Panc1 (cell line): ENCODE measurements at regions of chr6 and their contacts with region 1.

Region 1: DNA sequence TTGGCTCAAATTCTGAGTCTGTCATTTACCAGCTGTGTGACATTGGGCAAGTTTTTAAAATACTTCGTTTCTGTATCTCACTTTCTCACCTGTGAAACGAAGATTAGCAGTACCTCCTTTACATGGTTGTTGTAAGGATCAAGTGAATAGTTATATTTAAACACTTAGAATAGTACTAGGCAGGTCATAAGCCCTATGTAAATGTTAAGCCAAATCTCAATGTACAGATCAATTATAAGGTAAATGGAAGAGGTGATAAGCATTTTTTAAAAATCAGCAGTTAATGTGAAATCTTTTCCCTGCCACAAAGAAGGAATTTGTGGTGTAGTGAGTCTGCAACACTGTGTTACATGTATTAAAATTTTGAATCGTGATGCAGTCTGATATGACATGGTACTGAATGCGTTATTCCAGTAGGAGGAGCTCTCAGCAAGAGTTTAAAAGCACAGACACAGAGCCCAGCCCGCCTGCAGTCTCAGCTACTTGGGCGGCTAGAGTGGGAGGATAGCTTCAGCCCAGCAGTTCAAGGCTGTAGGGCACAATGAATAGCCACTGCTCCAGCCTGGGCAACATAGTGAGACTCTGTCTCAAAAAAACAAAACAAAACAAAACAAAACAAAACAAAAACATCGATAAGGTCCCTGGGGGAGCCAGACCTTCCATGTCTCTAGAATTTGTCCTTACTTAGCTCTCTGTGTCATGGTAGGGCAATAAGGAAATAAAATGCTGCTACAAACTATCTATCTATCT is 46.0 kb downstream of the GTF2H5 start:
- DNase-seq: peak; percentile 72
- ATAC-seq: peak; percentile 100
- H3K4me3 ChIP-seq: no peak overlapping the region
- H3K27ac ChIP-seq: no peak overlapping the region
- H3K4me1 ChIP-seq: no peaks in the 10 kb centered on the region
- H3K27me3 ChIP-seq: no peaks in the 10 kb centered on the region
- CTCF ChIP-seq: peak; percentile 88

Region 2: DNA sequence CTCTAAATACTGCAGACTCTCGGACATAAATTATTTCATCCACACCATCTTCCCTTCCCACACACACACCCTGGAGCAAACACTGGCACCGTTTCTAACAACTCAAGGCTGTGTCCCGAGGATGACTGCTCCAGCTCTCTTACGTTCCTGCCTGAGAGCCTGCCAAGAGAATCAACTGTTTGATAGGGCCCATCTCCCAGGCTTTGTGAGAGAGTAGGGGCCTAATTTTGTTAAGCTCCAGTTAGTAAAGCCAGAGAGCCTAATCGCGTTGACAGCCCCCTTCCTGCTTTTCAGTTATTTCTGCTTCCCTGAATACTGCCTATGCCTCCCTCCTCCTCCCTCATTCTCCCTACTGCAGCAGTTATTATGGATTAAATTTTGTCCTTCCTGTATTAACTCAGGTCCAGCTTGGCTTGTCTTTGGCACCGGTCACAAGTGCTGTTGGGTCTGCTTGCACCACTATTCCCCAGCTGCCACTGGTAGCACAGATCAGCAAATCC is 227.7 kb after region 1 on chr6:
- CTCF ChIA-PET with region 1: no interaction called
- POLR2A ChIA-PET with region 1: no interaction called
- in situ Hi-C with region 1: no loop called
- intact Hi-C with region 1: no loop called
- DNase-seq: no peak
- ATAC-seq: no peak
- H3K4me3 ChIP-seq: no peak overlapping the region
- H3K27ac ChIP-seq: no peak overlapping the region
- H3K4me1 ChIP-seq: peaks cover 5% of the 10 kb centered on the region; the same call in 1 of the 2 replicates
- H3K27me3 ChIP-seq: no peaks in the 10 kb centered on the region
- CTCF ChIP-seq: no peak

Region 3: GRCh38 chr6:158605266-158605878 is 391.3 kb after region 1 on chr6:
- CTCF ChIA-PET with region 1: interaction called, 29 read pairs
- POLR2A ChIA-PET with region 1: no interaction called
- in situ Hi-C with region 1: no loop called
- intact Hi-C with region 1: no loop called
- DNase-seq: peak; percentile 53
- ATAC-seq: peak; percentile 88
- H3K4me3 ChIP-seq: no peak overlapping the region
- H3K27ac ChIP-seq: no peak overlapping the region
- H3K4me1 ChIP-seq: no peaks in the 10 kb centered on the region
- H3K27me3 ChIP-seq: no peaks in the 10 kb centered on the region
- CTCF ChIP-seq: peak; percentile 84

Region 4: GRCh38 chr6:158630933-158631616 is 417.0 kb after region 1 on chr6:
- CTCF ChIA-PET with region 1: interaction called, 10 read pairs
- POLR2A ChIA-PET with region 1: no interaction called
- in situ Hi-C with region 1: no loop called
- intact Hi-C with region 1: no loop called
- DNase-seq: no peak
- ATAC-seq: 0 out of 2 replicates have a peak, but pooled peaks have one; percentile 35
- H3K4me3 ChIP-seq: no peak overlapping the region
- H3K27ac ChIP-seq: no peak overlapping the region
- H3K4me1 ChIP-seq: no peaks in the 10 kb centered on the region
- H3K27me3 ChIP-seq: no peaks in the 10 kb centered on the region
- CTCF ChIP-seq: no peak